ENCODE measurements at regions of chr22 and their contacts with region 1.

Region 1: GRCh38 chr22:36065775-36066559 is 37.3 kb upstream of the RBFOX2 start:
- DNase-seq: peak; percentile 87 to 93 (median 91)
- H3K4me3 ChIP-seq: peak overlapping the region; percentile 45
- H3K27ac ChIP-seq: peak overlapping the region; percentile 30 to 82
- H3K4me1 ChIP-seq: no peaks in the 10 kb centered on the region
- H3K27me3 ChIP-seq: no peaks in the 10 kb centered on the region
- CTCF ChIP-seq: peak; percentile 99 to 100 (median 99)
- EP300 ChIP-seq: no peak
- POLR2A ChIP-seq: no peak

Region 2: DNA sequence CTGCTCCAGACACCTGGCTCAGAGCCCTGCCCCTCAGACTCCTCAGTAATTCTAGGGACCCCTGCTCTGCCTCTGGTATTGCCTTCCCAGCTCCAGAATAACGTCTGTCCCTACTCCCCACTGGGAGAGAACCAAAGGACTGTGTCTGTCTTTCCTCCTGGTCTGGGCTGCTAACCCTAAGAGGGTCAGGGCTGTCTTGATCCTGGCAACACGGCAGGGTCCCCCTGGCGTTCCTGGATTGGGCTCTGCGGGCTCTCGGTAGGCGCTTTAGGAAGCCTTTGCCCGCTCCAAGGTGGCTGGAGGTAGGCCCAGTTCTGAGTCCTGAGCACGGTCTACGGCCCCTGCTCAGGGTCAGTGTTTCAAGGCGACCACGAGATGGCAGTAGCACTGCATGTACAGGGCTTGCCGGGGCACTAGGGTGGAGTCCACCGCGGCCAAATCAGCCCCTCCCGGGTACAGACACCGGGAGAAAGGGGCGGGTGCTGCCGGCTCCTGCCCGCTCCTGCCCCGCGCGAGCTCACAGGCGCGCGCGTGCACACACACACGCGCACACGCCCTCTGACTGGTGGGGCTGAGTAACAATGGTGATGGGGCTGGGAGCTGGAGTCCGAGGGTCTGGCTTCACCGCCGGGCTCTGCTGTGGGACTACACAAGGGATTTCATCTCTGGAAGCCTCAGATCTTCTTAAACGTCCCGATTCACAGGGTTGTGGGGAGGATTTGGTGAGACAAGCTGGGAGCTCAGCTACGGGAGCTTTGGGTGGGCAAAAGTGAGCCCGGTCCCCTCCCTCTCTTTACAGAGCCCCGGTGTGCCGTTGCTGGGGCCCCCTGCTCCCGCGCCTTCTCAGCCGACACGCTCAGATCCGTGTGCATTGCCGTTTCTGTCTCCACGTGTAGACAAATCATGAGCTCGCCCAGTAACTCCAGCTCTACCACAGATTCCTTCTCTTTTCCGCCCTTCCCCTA is 715.1 kb before region 1 on chr22:
- intact Hi-C with region 1: loop called in 1 of 4 experiments (anchors 10 kb)
- DNase-seq: peak; percentile 95 to 97 (median 95)
- H3K4me3 ChIP-seq: peak overlapping the region; percentile 42
- H3K27ac ChIP-seq: peak overlapping the region; percentile 53 to 92
- H3K4me1 ChIP-seq: peaks cover 9% of the 10 kb centered on the region
- H3K27me3 ChIP-seq: no peaks in the 10 kb centered on the region
- CTCF ChIP-seq: peak; percentile 96 to 97 (median 96)
- EP300 ChIP-seq: no peak
- POLR2A ChIP-seq: peak; percentile 55

Region 3: GRCh38 chr22:35648066-35649025 is 417.6 kb before region 1 on chr22 and contains the start of gene APOL6:
- intact Hi-C with region 1: loop called in 1 of 4 experiments (anchors 10 kb)
- DNase-seq: peak in 3 of 5 donors; percentile 55 to 61 (median 56)
- H3K4me3 ChIP-seq: peak within 1 kb of the TSS; percentile 82
- H3K27ac ChIP-seq: peak within 1 kb of the TSS; percentile 38 to 92
- H3K4me1 ChIP-seq: peaks cover 27% of the 10 kb centered on the region
- H3K27me3 ChIP-seq: no peaks in the 10 kb centered on the region
- CTCF ChIP-seq: no peak
- EP300 ChIP-seq: no peak
- POLR2A ChIP-seq: peak; percentile 40
- total RNA-seq, gene APOL6: 11.1 to 34.1 (median 21.4) TPM

Region 4: GRCh38 chr22:35930933-35931332 is 135.0 kb before region 1 on chr22:
- intact Hi-C with region 1: loop called in 3 of 4 experiments (anchors 5 to 10 kb)
- DNase-seq: no peak
- H3K4me3 ChIP-seq: no peak overlapping the region
- H3K27ac ChIP-seq: no peak overlapping the region
- H3K4me1 ChIP-seq: no peaks in the 10 kb centered on the region
- H3K27me3 ChIP-seq: no peaks in the 10 kb centered on the region
- CTCF ChIP-seq: peak; percentile 38 to 69 (median 63)
- EP300 ChIP-seq: no peak
- POLR2A ChIP-seq: no peak

Region 5: DNA sequence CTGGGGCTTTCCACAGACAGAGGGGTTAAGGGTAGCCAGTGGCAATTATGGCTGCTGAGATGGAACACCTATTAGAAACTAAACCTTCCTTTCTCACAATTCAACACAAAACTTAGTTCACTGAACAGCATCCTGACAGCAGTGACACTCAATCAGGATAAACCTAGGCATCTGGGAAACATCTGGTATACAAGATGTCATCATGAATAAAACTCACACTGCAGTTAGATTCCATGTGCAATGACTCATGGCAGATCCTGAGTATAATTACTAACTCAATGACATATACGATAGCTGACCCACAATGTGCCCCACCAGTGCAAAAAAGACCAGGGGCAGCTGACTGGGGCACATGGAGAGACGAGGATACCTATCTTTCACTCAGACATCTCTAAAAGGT is 55.1 kb before region 1 on chr22:
- intact Hi-C with region 1: no loop called
- DNase-seq: no peak
- H3K4me3 ChIP-seq: no peak overlapping the region
- H3K27ac ChIP-seq: peak overlapping the region in 1 of 2 donors; percentile 19
- H3K4me1 ChIP-seq: peaks cover 30% of the 10 kb centered on the region
- H3K27me3 ChIP-seq: no peaks in the 10 kb centered on the region
- CTCF ChIP-seq: no peak
- EP300 ChIP-seq: no peak
- POLR2A ChIP-seq: no peak

Region 6: DNA sequence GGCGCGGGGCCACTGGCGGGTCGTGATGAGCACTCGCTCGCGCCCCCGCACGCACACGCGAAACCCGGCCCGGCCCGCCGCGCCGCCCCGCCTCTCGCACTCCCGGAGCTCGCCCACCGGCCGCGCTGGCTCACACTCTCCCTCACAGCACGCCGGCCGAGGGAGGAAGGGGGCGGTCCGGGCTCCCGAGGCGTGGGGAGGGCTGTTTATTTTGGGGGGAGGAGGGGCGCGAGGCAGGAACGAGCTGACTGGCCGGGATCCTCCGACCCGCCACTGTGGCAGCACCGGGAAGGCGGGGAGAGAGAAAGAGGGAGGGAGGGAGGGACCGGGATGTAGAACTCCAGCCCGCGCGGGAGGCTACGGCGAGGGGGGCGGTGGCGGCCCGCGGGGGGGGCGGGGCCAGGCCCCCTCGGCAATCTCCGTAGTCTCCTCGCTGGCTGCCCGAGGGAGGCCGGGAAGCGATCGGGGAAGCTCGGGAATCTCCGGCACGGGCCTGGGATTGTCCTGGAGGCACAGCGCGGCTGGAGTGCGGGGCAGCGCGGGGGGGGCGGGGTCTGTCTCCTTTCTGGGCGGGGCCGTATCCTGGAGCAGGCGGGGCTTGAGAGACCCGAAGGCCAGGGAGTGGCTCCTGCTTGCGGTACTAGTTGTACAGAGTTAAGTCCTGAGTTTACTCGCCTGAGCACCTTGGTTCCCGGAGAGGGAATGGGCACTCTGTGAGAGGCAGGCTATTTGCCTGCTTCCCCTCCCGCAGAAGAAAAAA is 37.1 kb before region 1 on chr22 and contains the start of gene RBFOX2:
- intact Hi-C with region 1: loop called in 1 of 4 experiments (anchors 1 kb)
- DNase-seq: peak; percentile 98 to 99 (median 99)
- H3K4me3 ChIP-seq: peak within 1 kb of the TSS; percentile 66
- H3K27ac ChIP-seq: peak within 1 kb of the TSS; percentile 84 to 93
- H3K4me1 ChIP-seq: peaks cover 8% of the 10 kb centered on the region
- H3K27me3 ChIP-seq: no peaks in the 10 kb centered on the region
- CTCF ChIP-seq: no peak
- EP300 ChIP-seq: no peak
- POLR2A ChIP-seq: peak; percentile 54
- total RNA-seq, gene RBFOX2: 71.1 to 137 (median 128) TPM

Region 7: DNA sequence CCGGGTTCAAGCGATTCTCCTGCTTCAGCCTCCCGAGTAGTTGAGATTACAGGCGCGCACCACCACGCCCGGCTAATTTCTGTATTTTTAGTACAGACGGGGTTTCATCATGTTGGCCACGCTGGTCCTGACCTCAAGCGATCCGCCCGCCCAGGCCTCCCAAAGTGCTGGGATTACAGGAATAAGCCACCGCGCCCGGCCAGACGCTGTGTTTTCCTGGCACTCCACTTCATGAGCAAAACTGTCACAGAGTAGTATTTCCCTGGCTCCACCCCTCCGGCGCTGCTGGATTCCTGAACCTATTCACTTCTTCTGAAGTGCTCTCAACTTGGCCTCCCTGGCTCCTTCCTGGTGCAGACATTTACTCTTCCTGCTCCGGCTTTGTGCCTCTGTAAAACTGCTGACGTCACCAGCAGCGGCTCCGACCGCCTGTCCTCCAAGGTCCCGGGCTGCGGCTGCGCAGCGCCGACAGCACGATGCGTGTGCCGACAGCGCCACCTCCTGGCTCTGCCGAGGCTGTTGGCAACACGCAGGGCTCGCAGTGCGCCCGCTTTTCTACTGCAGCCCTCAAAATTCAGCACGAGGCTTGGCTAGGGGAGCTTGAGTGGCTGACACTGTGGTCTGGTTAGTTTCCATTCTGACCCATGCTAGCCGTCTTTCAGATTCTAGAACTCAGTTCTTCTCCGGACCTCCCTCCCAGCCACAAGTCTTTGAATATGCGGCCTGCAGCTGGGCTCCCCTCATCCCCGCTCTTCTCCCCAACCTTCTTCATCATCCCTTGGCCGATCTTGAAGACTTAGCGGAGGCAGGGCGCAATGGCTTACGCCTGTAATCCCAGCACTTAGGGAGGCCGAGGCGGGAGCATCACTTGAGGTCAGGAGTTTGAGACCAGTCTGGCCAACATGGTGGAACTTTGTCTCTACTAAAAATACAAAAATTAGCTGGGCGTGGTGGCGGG is 58.0 kb after region 1 on chr22:
- intact Hi-C with region 1: loop called in 3 of 4 experiments (anchors 5 to 10 kb)
- DNase-seq: peak; percentile 94 to 97 (median 95)
- H3K4me3 ChIP-seq: peak overlapping the region; percentile 33
- H3K27ac ChIP-seq: peak overlapping the region; percentile 33 to 79
- H3K4me1 ChIP-seq: no peaks in the 10 kb centered on the region
- H3K27me3 ChIP-seq: no peaks in the 10 kb centered on the region
- CTCF ChIP-seq: peak; percentile 94 to 99 (median 98)
- EP300 ChIP-seq: peak; percentile 55
- POLR2A ChIP-seq: peak; percentile 5

Region 8: GRCh38 chr22:36277482-36278291 is 211.7 kb after region 1 on chr22:
- intact Hi-C with region 1: no loop called
- DNase-seq: peak in 4 of 5 donors; percentile 57 to 74 (median 66)
- H3K4me3 ChIP-seq: no peak overlapping the region
- H3K27ac ChIP-seq: no peak overlapping the region
- H3K4me1 ChIP-seq: no peaks in the 10 kb centered on the region
- H3K27me3 ChIP-seq: no peaks in the 10 kb centered on the region
- CTCF ChIP-seq: peak; percentile 52 to 76 (median 63)
- EP300 ChIP-seq: no peak
- POLR2A ChIP-seq: no peak

Region 9: GRCh38 chr22:36331306-36331911 is 265.4 kb after region 1 on chr22:
- intact Hi-C with region 1: no loop called
- DNase-seq: peak in 4 of 5 donors; percentile 54 to 66 (median 58)
- H3K4me3 ChIP-seq: no peak overlapping the region
- H3K27ac ChIP-seq: peak overlapping the region; percentile 1 to 75
- H3K4me1 ChIP-seq: peaks cover 53% of the 10 kb centered on the region
- H3K27me3 ChIP-seq: no peaks in the 10 kb centered on the region
- CTCF ChIP-seq: no peak
- EP300 ChIP-seq: no peak
- POLR2A ChIP-seq: no peak

Region 10: DNA sequence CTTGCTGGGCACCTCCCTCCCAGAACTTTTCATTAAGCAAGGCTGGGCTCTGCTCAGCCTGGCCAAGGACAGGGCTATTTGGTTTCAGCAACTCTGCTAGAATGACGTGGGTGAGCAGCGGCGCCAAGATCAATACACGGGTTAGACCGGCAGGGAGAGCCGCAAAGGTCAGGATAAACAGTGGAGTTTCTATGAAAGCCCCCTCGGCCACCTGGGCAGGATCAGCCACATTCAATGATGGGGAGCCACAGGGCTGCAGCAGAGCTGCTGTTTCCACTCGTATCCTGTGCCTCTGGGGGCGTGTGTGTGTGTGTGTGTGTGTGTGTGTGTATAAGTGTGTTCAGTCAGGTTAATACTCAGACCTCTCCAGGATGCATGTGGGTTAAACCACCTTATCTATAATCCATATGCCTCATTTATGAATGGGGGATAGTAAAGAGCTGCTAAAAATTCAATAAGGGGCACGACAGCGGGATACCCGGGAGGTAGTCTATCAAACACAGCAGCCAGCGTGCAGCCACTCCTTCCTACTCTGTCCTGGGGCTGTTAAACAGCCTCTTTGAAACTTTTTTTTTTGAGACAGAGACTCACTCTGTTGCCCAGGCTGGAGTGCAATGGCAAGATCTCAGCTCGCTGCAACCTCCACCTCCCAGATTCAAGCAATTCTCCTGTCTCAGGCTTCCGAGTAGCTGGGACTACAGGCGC is 287.0 kb after region 1 on chr22:
- intact Hi-C with region 1: no loop called
- DNase-seq: peak; percentile 65 to 87 (median 83)
- H3K4me3 ChIP-seq: no peak overlapping the region
- H3K27ac ChIP-seq: peak overlapping the region; percentile 43 to 76
- H3K4me1 ChIP-seq: peaks cover 44% of the 10 kb centered on the region
- H3K27me3 ChIP-seq: no peaks in the 10 kb centered on the region
- CTCF ChIP-seq: no peak
- EP300 ChIP-seq: no peak
- POLR2A ChIP-seq: no peak